B cell (primary cell): ENCODE measurements at regions of chr7 and their contacts with region 1.

Region 1: GRCh38 chr7:117110480-117111337 is 157.4 kb downstream of the ST7 start:
- DNase-seq: peak; percentile 51
- ATAC-seq: peak; percentile 92
- H3K4me3 ChIP-seq: no peak overlapping the region
- H3K4me3 Mint-ChIP-seq: peak overlapping the region; percentile 57
- H3K27ac ChIP-seq: peak overlapping the region in 1 of 2 donors; percentile 32
- H3K27ac Mint-ChIP-seq: peak overlapping the region; percentile 83
- H3K4me1 ChIP-seq: peaks cover 11% of the 10 kb centered on the region in 2 donors
- H3K4me1 Mint-ChIP-seq: peaks cover 13% of the 10 kb centered on the region
- H3K27me3 ChIP-seq: no peaks in the 10 kb centered on the region
- H3K27me3 Mint-ChIP-seq: no peaks in the 10 kb centered on the region
- CTCF ChIP-seq: no peak

Region 2: DNA sequence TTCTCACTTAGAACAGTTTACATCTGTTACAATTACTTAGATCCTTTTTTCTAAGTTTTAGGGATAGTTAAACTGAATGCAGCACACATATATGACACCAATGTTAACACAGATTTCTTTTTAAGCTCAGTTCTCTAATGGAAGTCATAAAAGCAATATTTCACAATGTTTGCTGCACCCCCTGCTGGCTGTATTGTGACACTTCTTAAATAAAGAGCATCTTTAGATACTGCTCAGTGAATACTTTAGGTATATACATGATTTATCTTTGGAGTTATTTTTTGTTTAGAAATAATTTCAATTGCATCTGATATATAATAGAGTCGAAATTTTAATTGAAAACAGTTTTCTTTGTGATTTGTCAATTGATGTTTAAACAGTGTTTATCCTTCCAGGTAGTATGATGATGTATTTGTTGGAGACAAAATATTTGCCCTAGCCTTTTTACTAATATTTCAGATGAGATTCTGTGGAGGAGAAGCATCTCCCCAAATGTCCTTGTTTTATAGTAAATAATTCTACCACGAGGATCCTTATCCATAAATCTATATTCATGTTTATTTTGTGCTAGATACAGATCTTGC is 17.0 kb after region 1 on chr7:
- CTCF ChIA-PET with region 1: interaction called, 11 read pairs
- POLR2A ChIA-PET with region 1: no interaction called
- intact Hi-C with region 1: no loop called
- DNase-seq: peak; percentile 55
- ATAC-seq: no peak
- H3K4me3 ChIP-seq: no peak overlapping the region
- H3K4me3 Mint-ChIP-seq: no peak overlapping the region
- H3K27ac ChIP-seq: no peak overlapping the region
- H3K27ac Mint-ChIP-seq: no peak overlapping the region
- H3K4me1 ChIP-seq: no peaks in the 10 kb centered on the region
- H3K4me1 Mint-ChIP-seq: no peaks in the 10 kb centered on the region
- H3K27me3 ChIP-seq: no peaks in the 10 kb centered on the region
- H3K27me3 Mint-ChIP-seq: no peaks in the 10 kb centered on the region
- CTCF ChIP-seq: peak; percentile 93